Vagina (tissue), 2 donors: ENCODE measurements at regions of chr2 and their contacts with region 1.

Region 1: GRCh38 chr2:60998628-60999545 is 18.6 kb upstream of the PEX13 start:
- DNase-seq: no peak
- H3K4me3 ChIP-seq: no peak overlapping the region
- H3K27ac ChIP-seq: no peak overlapping the region
- H3K4me1 ChIP-seq: no peaks in the 10 kb centered on the region
- H3K27me3 ChIP-seq: no peaks in the 10 kb centered on the region
- CTCF ChIP-seq: peak; percentile 52 to 71 (median 53)
- POLR2A ChIP-seq: no peak

Region 2: DNA sequence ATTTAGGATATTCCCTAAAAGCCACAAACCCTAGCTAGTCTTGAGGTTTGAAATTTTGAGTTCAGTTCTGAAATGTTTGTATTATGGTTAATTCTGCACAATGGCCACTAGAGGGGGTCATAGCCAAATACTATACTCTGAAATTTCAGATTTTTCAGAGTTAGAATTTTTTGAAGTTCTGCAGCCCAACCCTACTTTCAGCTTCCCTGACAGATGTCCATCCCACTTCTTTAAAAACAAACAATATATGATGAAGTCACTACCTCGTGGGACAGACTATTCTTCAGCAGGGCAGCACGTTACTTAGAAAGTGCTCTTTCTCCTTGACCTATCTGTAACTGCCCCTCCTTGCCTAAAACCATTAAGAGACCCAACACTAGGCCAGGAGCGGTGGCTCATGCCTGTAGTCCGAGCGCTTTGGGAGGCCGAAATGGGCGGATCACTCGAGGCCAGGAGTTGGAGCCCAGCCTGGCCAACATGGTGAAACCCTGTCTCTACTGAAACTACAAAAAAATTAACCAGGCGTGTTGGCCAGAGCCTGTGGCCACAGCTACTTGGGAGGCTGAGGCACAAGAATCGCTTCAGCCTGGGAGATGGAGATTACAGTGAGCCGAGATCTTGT is 291.0 kb before region 1 on chr2:
- intact Hi-C with region 1: loop called (anchors 5 kb)
- DNase-seq: no peak
- H3K4me3 ChIP-seq: no peak overlapping the region
- H3K27ac ChIP-seq: no peak overlapping the region
- H3K4me1 ChIP-seq: no peaks in the 10 kb centered on the region
- H3K27me3 ChIP-seq: no peaks in the 10 kb centered on the region
- CTCF ChIP-seq: peak; percentile 52 to 57 (median 52)
- POLR2A ChIP-seq: no peak

Region 3: DNA sequence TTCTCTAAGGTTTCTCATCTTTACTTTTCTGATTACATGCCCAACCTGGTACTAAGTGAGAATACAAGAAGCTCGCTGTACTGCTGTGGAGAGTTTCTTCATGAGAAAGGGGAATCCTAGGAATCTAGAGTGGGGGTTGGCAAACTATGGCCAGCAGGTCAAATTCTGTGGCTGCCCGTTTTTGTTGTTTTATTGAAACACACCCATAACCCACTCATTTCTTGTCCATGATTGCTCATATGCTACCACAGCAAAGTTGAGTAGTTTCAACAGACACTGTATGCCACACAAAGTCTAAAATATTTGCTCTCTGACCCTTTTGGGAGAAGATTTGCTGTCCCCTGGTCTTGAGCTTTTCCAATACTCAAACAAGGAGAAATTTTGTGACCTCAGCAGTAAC is 221.9 kb after region 1 on chr2:
- intact Hi-C with region 1: no loop called
- DNase-seq: no peak
- H3K4me3 ChIP-seq: no peak overlapping the region
- H3K27ac ChIP-seq: no peak overlapping the region
- H3K4me1 ChIP-seq: no peaks in the 10 kb centered on the region
- H3K27me3 ChIP-seq: no peaks in the 10 kb centered on the region
- CTCF ChIP-seq: no peak
- POLR2A ChIP-seq: no peak

Region 4: DNA sequence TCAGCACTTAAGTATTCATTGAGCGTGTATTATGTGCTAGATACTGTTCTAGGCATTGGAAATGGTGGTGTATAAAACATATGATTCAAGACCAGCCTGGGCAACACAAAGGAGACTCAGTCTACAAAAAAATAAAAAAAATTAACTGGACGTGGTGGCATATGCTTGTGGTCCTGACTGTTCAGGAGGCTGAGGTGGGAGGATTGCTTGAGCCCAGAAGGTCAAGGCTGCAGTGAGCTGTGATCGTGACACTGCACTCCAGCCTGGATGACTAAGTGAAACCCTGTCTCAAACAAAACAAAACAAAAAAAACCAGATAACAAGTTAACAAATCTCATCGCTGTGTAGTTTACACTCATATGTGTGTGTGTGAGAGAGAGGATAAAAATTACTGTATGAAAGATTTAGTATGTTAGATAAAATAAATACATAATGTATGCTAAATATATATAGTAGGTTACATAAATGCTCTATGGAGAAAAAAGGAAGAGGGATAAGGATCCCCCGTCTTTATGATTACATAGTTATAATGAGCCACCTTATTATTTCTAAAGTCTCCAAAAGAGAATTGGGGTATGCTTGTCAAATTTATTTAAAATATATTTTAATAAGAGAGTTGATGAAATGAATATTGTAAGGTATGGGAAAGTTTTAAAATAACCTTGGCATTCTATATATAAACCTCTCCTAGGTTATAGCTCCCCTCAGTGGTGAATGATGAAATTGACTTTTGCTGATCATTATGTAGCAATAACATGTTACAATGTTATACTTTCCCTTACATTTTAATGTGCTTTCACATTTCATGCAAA is 1775.9 kb after region 1 on chr2:
- intact Hi-C with region 1: no loop called
- DNase-seq: no peak
- H3K4me3 ChIP-seq: no peak overlapping the region
- H3K27ac ChIP-seq: no peak overlapping the region
- H3K4me1 ChIP-seq: no peaks in the 10 kb centered on the region
- H3K27me3 ChIP-seq: no peaks in the 10 kb centered on the region
- CTCF ChIP-seq: peak in 2 of 3 experiments; percentile 47 to 59
- POLR2A ChIP-seq: no peak